ENCODE measurements at regions of chr1 and their contacts with region 1.

Region 1: DNA sequence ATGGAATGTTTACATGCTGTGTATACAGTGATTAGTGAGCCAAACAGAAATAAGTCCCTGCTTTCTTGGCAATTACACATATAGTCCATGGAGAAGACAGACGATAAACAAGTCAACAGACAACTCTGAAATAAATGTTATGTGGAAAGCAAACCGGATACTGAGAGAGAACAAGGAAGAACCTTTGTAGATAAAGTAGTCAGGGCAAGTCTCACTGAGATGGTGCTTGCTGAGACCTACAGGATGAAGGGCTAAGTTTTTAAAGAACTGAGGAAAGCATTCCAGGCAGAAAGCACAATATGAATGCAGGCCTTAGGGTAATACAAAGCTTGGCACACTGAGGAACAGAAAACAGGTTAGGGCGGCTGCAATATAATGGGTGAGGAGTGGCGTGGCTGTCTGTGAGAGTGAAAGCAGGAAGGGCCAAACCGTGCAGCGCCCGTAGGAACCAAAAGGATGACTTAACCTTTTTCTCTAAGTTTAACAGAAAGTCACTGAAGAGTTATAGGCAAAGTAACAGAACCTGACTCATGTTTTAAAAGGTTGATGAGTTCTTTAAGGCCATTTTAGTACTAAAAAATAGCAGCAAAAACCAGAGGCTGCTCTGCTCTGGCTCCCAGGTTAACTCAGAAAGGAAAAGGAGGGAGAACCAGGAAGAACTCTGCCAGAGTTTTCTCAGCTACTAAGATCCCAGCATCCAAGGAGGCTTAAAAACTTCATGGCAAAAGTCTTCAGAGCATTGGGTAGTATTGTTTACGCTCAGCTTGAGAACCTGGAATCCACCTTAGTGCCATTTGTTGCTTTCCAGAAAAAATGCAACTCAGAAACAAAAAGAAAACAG is 8.7 kb upstream of the TTF2 start:
- DNase-seq: no peak
- H3K4me3 ChIP-seq: no peak overlapping the region
- H3K27ac ChIP-seq: no peak overlapping the region
- H3K4me1 ChIP-seq: peaks cover 8 to 13% of the 10 kb centered on the region in 2 donors
- H3K27me3 ChIP-seq: no peaks in the 10 kb centered on the region
- CTCF ChIP-seq: no peak
- POLR2A ChIP-seq: no peak

Region 2: DNA sequence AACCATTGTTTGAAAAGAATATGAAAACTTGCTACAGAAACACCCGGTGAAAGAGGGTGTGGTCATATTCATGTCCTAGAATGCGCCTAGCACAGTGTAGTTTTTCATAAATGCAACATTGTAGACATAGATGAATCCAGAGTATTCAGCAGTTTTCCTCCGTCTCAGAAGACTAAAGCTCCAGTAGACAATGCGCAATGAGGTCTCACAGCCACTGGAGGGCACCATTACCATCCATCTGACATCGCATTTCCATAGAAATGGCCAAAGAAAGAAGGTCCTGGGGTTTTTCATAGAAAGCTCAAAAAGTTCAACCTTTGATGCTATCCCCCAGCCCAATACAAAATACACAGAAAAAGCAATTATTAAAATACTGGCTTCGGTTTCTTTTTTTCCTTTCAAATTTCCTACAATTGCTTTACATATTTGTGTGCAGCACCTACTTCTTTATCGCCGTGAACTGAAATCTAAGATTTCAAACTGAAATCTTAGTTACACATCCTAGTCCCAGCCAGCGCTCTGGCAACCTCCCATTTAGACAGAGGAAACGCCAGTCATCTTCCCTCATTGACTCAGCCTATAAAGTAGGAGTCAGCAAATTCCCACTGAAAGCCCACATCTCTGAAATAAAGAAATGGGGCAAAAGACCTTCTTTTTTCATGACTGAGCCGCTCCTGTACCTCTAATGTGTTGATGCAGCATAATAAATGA is 476.7 kb before region 1 on chr1:
- intact Hi-C with region 1: loop called (anchors 5 kb)
- DNase-seq: peak; percentile 64 to 70
- H3K4me3 ChIP-seq: no peak overlapping the region
- H3K27ac ChIP-seq: no peak overlapping the region
- H3K4me1 ChIP-seq: peaks cover 6 to 9% of the 10 kb centered on the region in 2 donors
- H3K27me3 ChIP-seq: no peaks in the 10 kb centered on the region
- CTCF ChIP-seq: peak in 5 of 6 experiments; percentile 70 to 87 (median 83)
- POLR2A ChIP-seq: no peak

Region 3: DNA sequence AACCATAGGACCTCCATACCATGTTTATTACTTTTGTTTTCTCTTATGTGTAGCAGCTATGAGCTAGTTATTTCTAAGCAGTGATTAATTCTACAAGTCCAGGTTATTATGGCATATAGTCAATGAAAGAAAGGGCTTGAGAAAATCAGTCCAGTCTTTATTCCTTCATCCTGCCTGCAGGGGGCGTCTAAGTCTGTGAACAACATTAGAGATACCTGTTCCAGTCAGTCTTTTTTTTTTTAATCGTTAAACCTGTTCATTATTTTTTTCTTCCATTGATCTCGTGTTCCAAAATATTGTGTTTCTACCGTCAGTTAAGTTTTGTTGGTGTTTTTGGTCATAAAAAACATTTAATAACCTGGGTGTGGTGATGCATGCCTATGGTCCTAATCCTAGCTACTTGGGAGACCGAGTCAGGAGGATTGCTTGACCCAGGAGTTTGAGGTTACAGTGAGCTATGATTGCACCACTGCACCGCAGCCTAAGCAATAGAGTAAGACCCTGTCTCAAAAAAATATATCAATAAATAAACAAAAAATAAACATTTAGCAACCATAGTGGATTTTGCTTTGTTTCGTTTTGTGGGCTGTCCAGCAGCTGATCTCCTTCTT is 326.6 kb before region 1 on chr1:
- intact Hi-C with region 1: loop called (anchors 5 kb)
- DNase-seq: peak; percentile 60 to 74
- H3K4me3 ChIP-seq: no peak overlapping the region
- H3K27ac ChIP-seq: no peak overlapping the region
- H3K4me1 ChIP-seq: no peaks in the 10 kb centered on the region
- H3K27me3 ChIP-seq: no peaks in the 10 kb centered on the region
- CTCF ChIP-seq: peak; percentile 47 to 75 (median 63)
- POLR2A ChIP-seq: no peak

Region 4: DNA sequence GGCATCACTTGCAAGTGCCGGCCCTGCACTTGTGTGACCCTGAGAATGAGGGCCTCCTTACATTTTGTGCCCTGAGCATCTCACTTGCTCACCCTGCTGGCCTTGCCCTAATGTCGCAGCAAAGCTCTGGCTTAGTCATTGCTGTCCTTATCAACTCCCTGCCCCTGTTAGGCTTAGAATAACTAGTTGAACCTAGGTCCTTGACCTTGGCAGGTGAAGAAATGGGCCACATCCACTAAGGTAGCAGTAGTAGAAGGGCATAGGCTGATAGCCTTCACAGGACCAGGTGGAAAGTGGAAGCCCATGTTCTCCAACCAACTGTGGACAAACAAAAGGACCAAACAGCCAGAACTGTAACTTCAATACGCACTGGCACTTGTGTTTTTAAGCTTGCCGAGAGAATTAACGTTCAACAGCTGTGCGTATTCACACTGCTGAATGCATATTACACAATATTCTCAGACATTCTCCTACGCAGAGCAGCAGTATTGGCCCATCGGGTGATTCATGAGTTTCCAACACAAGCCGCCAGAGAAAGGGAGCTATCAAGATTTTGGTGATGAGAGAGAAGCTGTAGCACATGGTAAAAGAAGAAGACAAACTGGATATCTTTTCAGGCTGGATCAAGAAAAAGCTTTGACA is 169.4 kb before region 1 on chr1:
- intact Hi-C with region 1: no loop called
- DNase-seq: no peak
- H3K4me3 ChIP-seq: no peak overlapping the region
- H3K27ac ChIP-seq: peak overlapping the region in 1 of 3 donors; percentile 49
- H3K4me1 ChIP-seq: peaks cover 14 to 18% of the 10 kb centered on the region in 2 donors
- H3K27me3 ChIP-seq: no peaks in the 10 kb centered on the region
- CTCF ChIP-seq: no peak
- POLR2A ChIP-seq: no peak

Region 5: DNA sequence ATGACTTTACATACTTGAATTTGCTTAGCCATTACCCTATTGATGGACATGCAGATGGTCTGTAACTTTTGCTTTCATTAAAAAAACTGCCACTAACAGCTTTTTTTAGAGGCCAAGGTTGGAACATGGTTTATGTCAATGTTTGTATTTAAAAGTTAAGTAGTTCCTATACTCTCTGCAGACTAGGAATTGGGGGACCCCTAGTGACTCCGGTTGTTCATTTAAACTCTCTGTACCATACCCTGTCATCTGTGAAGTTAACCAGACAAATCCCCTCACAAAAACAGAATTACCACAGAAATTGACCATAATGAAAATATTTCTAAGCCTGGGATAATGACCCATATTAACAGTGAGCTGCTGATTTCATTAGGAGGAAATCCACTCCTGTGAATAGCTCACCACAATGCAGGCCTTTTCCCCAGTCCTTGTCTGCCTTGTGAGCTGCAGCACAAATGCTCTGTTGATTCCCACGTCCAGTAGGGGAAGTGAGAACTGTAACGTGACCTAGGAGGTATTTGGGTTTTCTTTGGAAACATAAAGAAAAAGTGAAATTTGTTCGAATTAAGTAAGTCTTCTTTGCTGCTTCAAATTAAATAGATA is 80.1 kb before region 1 on chr1:
- intact Hi-C with region 1: no loop called
- DNase-seq: no peak
- H3K4me3 ChIP-seq: no peak overlapping the region
- H3K27ac ChIP-seq: no peak overlapping the region
- H3K4me1 ChIP-seq: peaks cover 0 to 4% of the 10 kb centered on the region in 2 donors
- H3K27me3 ChIP-seq: no peaks in the 10 kb centered on the region
- CTCF ChIP-seq: no peak
- POLR2A ChIP-seq: no peak

Region 6: DNA sequence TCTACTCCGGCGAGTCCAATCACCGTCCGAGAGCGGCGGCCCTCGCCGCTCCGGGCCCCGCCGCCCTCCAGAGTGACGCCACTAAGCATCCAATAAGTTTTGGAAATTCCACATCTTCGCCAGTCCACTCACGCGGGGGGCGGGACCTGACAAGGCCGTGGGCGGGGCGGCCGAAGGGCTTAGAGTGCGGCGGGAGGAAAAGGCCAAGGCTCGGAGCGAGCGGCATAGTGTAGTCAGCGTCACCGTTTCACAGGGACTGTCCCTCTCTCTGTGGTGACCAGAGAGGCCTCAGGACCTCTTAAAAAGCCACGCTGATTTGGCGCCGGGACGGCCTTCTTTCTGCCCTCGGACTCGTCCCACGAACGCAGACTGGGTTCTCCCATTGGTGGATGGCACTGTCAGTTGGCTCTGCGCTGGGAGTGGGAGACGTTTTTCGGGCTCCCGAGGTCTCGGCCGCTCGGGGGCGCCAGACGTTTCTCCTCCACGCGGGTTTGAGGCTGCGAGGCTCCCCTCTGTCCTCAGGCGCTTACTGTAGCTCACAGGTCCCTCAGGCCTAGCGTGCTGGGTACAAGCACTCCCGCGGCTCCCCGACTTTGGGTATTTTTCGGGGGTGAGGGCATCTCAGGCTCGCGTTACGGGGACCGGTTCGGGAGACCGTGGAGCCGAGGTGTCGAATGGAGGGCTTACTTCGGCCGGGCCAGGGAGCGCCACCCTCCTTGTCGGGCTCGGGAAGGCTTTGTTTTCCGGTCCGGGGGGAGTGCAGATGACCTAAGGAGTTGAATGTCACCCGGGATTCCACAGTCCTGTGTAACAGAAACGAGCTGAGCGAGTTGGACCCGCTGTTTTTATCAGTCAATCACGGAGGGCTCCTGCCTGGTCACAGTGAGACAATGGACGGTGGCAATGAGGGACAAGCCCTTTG is 70.6 kb after region 1 on chr1:
- intact Hi-C with region 1: no loop called
- DNase-seq: peak; percentile 98
- H3K4me3 ChIP-seq: peak overlapping the region; percentile 18 to 80 (median 59)
- H3K27ac ChIP-seq: peak overlapping the region; percentile 84 to 94 (median 87)
- H3K4me1 ChIP-seq: peaks cover 9 to 11% of the 10 kb centered on the region in 2 donors
- H3K27me3 ChIP-seq: no peaks in the 10 kb centered on the region
- CTCF ChIP-seq: peak; percentile 38 to 82 (median 70)
- POLR2A ChIP-seq: peak in 1 of 2 donors; percentile 45